Keratinocyte (primary cell): ENCODE measurements at regions of chr7 and their contacts with region 1.

Region 1: GRCh38 chr7:95511716-95512260 is 26.0 kb downstream of the ASB4 start:
- DNase-seq: peak; percentile 5
- H3K4me3 ChIP-seq: no peak overlapping the region
- H3K27ac ChIP-seq: no peak overlapping the region
- H3K4me1 ChIP-seq: no peaks in the 10 kb centered on the region
- H3K27me3 ChIP-seq: no peaks in the 10 kb centered on the region
- CTCF ChIP-seq: peak; percentile 76 to 92 (median 81)

Region 2: DNA sequence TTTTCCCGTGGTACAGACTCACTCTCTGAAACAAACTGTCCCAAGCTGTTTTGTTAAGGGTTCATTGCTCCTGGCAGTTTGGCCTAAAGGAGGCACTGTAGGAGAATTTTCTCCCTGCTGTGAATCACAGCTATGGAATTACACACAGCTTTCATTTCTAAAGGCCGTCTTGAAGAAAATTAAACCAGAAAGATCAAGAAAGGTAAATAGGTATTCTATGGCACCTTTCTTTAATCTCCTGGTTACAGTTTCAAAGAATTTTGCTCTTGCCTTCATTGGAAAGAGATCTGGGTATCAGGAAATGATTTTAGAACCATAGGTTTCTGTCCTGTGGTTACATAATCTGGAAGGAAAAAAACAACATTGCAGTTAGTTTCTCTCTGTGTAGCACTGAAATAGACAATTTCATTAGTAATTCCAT is 33.3 kb after region 1 on chr7:
- dilution Hi-C with region 1: no loop called
- DNase-seq: no peak
- H3K4me3 ChIP-seq: peak overlapping the region in 2 of 3 experiments; percentile 43 to 54
- H3K27ac ChIP-seq: peak overlapping the region; percentile 44
- H3K4me1 ChIP-seq: peaks cover 13% of the 10 kb centered on the region
- H3K27me3 ChIP-seq: peaks cover 4% of the 10 kb centered on the region
- CTCF ChIP-seq: peak; percentile 57 to 62 (median 62)

Region 3: GRCh38 chr7:95690367-95690947 is 178.7 kb after region 1 on chr7:
- dilution Hi-C with region 1: loop called (anchors 25 kb)
- DNase-seq: no peak
- H3K4me3 ChIP-seq: no peak overlapping the region
- H3K27ac ChIP-seq: no peak overlapping the region
- H3K4me1 ChIP-seq: peaks cover 14% of the 10 kb centered on the region
- H3K27me3 ChIP-seq: no peaks in the 10 kb centered on the region
- CTCF ChIP-seq: peak; percentile 26 to 46 (median 41)